Mammary epithelial cell (primary cell): ENCODE measurements at regions of chr3 and their contacts with region 1.

Region 1: GRCh38 chr3:79361748-79362378 is 405.9 kb downstream of the ROBO1 start:
- DNase-seq: peak; percentile 29
- H3K4me3 ChIP-seq: no peak overlapping the region
- H3K27ac ChIP-seq: no peak overlapping the region
- H3K4me1 ChIP-seq: peaks cover 3% of the 10 kb centered on the region
- H3K27me3 ChIP-seq: no peaks in the 10 kb centered on the region
- CTCF ChIP-seq: peak; percentile 69 to 75

Region 2: GRCh38 chr3:78846718-78847117 is 515.1 kb before region 1 on chr3:
- CTCF ChIA-PET with region 1: no interaction called
- dilution Hi-C with region 1: no loop called
- in situ Hi-C with region 1: no loop called
- intact Hi-C with region 1: no loop called
- DNase-seq: peak; percentile 72
- H3K4me3 ChIP-seq: no peak overlapping the region
- H3K27ac ChIP-seq: no peak overlapping the region
- H3K4me1 ChIP-seq: peaks cover 11% of the 10 kb centered on the region
- H3K27me3 ChIP-seq: no peaks in the 10 kb centered on the region
- CTCF ChIP-seq: no peak

Region 3: GRCh38 chr3:79086514-79086913 is 275.3 kb before region 1 on chr3:
- CTCF ChIA-PET with region 1: interaction called, 15 read pairs
- dilution Hi-C with region 1: no loop called
- in situ Hi-C with region 1: loop called (anchors 10 to 25 kb)
- intact Hi-C with region 1: loop called (anchors 1 kb)
- DNase-seq: peak; percentile 43
- H3K4me3 ChIP-seq: no peak overlapping the region
- H3K27ac ChIP-seq: no peak overlapping the region
- H3K4me1 ChIP-seq: no peaks in the 10 kb centered on the region
- H3K27me3 ChIP-seq: peaks cover 2% of the 10 kb centered on the region
- CTCF ChIP-seq: peak; percentile 85 to 88

Region 4: DNA sequence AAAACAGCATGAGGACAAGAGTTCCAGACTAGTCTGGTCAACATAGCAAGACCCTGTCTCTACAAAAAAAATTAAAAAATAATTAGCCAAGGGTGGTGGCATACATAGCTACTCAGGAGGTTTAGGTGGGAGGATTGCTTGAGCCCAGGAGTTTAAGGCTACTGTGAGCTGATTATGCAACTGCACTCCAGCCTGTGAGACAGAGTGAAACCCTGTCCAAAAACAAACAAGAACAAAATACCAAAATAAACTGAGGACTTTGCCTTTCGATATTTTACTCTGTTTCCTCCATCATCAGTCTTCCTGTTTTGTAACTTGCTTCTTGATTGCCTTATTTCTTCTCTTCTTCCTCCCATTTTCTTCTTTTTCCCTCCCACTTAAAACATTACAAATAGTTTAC is 98.4 kb before region 1 on chr3:
- CTCF ChIA-PET with region 1: no interaction called
- dilution Hi-C with region 1: no loop called
- in situ Hi-C with region 1: no loop called
- intact Hi-C with region 1: no loop called
- DNase-seq: no peak
- H3K4me3 ChIP-seq: no peak overlapping the region
- H3K27ac ChIP-seq: no peak overlapping the region
- H3K4me1 ChIP-seq: no peaks in the 10 kb centered on the region
- H3K27me3 ChIP-seq: peaks cover 2% of the 10 kb centered on the region
- CTCF ChIP-seq: no peak